Activated CD4-positive, alpha-beta T cell treated with anti-CD3 and anti-CD28 coated beads, Interleukin-2, amount 10 ng/mL, durations not matched to agents 7 days and 5 days (primary cell): ENCODE measurements at regions of chr20 and their contacts with region 1.

Region 1: DNA sequence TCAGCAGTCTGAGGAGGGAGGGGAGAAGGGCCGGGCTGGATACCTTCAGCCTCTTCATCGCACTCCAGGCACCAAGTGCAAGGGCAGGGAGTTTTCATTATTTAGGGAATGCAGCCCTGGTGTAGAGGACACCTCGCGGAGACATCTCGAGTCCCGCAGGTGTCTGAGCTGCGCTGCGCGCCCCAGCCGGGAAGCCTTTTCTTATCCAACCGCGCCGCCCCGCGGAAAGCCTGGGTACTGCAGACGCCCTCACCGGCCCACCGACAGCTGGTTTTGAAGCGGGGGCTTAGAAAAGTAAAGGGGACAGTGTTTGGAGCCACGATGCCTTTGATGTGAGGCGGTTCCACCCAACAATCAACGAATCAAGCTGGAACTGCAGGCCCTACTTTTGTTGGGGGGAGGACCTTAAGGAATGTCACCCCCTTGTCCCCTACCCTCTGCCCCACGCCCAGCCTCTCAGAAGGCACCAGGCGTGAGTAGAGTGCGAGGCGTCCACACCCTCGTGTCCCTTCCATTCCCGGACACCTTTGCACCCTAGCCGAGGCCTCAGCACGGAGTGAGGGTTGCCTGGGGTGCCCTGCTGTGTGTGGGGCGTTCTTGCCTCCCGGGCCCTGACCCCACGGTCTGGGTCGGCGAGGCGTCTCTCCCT is 8.6 kb downstream of the NKX2-2 start:
- DNase-seq: peak; percentile 74
- H3K4me3 Mint-ChIP-seq: no peak overlapping the region
- H3K27ac Mint-ChIP-seq: no peak overlapping the region
- H3K4me1 Mint-ChIP-seq: peaks cover 26% of the 10 kb centered on the region
- H3K27me3 Mint-ChIP-seq: peaks cover 50% of the 10 kb centered on the region

Region 2: GRCh38 chr20:20860078-20860806 is 645.0 kb before region 1 on chr20:
- CTCF ChIA-PET with region 1: interaction called, 10 read pairs
- POLR2A ChIA-PET with region 1: no interaction called
- DNase-seq: peak; percentile 89
- H3K4me3 Mint-ChIP-seq: no peak overlapping the region
- H3K27ac Mint-ChIP-seq: no peak overlapping the region
- H3K4me1 Mint-ChIP-seq: no peaks in the 10 kb centered on the region
- H3K27me3 Mint-ChIP-seq: peaks cover 16% of the 10 kb centered on the region

Region 3: GRCh38 chr20:21102603-21103311 is 402.5 kb before region 1 on chr20:
- CTCF ChIA-PET with region 1: interaction called, 12 read pairs
- POLR2A ChIA-PET with region 1: no interaction called
- DNase-seq: peak; percentile 48
- H3K4me3 Mint-ChIP-seq: peak overlapping the region; percentile 79
- H3K27ac Mint-ChIP-seq: peak overlapping the region; percentile 66
- H3K4me1 Mint-ChIP-seq: peaks cover 53% of the 10 kb centered on the region
- H3K27me3 Mint-ChIP-seq: peaks cover 86% of the 10 kb centered on the region

Region 4: GRCh38 chr20:21219686-21220085 is 285.6 kb before region 1 on chr20:
- CTCF ChIA-PET with region 1: no interaction called
- POLR2A ChIA-PET with region 1: no interaction called
- DNase-seq: no peak
- H3K4me3 Mint-ChIP-seq: no peak overlapping the region
- H3K27ac Mint-ChIP-seq: no peak overlapping the region
- H3K4me1 Mint-ChIP-seq: no peaks in the 10 kb centered on the region
- H3K27me3 Mint-ChIP-seq: no peaks in the 10 kb centered on the region

Region 5: DNA sequence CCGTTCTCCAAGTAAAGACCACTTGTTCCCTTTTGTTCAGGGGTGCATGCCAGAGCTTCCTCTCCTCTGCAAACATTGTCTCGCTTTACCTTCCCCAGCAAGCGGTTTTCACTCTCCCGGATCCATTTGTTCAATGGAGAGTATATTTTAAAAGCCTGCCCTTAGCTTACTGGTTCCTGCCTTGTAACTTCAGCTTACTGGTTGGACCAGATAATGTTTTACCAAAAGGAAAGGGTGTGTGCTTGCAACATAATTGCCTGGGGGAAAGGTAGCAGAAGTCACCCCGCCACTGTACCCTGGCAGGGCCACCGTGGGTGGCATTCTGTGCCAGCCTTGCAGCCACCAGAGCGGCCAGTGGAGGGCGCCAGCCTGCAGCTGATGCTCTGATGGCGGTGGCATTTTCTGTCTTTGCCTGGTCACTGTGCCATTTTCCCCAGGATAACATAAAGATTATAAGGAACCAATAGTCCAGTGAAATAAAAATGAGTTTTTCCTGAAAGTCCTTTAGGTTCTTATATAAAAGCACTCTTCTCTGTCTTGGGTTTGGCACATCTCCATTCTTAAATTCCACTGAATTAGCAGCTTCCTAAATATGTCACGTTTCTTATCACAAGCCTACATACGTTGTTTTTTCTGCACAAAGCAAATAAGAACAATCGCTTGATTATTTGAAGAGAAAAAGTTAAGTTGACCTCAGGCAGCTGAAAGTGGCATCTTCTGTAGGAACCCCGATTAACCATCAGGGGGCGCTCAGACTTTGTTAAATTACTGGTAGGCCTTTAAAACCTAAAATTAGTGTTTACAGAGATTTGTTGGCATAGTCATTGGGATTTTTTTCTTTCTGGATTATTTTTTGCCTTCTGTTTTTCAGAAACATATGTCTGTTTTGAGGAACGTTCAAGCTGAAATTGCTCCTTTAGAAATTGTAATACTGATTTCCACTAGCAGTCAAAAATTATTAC is 269.5 kb before region 1 on chr20:
- CTCF ChIA-PET with region 1: interaction called, 65 read pairs
- POLR2A ChIA-PET with region 1: no interaction called
- DNase-seq: peak; percentile 77
- H3K4me3 Mint-ChIP-seq: no peak overlapping the region
- H3K27ac Mint-ChIP-seq: no peak overlapping the region
- H3K4me1 Mint-ChIP-seq: peaks cover 2% of the 10 kb centered on the region
- H3K27me3 Mint-ChIP-seq: no peaks in the 10 kb centered on the region

Region 6: GRCh38 chr20:21352703-21353102 is 152.6 kb before region 1 on chr20:
- CTCF ChIA-PET with region 1: no interaction called
- POLR2A ChIA-PET with region 1: no interaction called
- DNase-seq: no peak
- H3K4me3 Mint-ChIP-seq: no peak overlapping the region
- H3K27ac Mint-ChIP-seq: no peak overlapping the region
- H3K4me1 Mint-ChIP-seq: no peaks in the 10 kb centered on the region
- H3K27me3 Mint-ChIP-seq: no peaks in the 10 kb centered on the region

Region 7: GRCh38 chr20:21395666-21396598 is 109.4 kb before region 1 on chr20:
- CTCF ChIA-PET with region 1: interaction called, 10 read pairs
- POLR2A ChIA-PET with region 1: no interaction called
- DNase-seq: peak; percentile 64
- H3K4me3 Mint-ChIP-seq: peak overlapping the region; percentile 62
- H3K27ac Mint-ChIP-seq: peak overlapping the region; percentile 63
- H3K4me1 Mint-ChIP-seq: peaks cover 35% of the 10 kb centered on the region
- H3K27me3 Mint-ChIP-seq: peaks cover 78% of the 10 kb centered on the region

Region 8: DNA sequence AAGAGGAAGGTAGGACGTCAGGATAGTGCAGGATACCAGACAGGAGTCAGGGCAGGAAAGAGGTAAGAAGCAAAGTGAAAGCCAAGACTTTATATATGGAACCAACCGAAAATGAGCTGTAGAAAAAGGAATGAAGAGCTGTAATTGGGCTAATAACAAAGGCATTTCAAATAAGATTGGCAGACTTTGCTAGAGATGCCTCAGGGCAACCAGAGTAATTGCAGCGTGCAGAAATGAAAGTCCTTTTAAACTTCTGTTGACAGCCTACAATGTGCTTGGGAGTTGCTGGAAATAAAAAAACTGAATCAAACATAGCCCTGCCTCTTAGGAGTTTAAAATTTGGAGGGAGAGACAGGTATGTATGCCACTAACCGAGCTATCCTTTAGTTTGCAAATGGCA is 51.6 kb before region 1 on chr20:
- CTCF ChIA-PET with region 1: no interaction called
- POLR2A ChIA-PET with region 1: no interaction called
- DNase-seq: no peak
- H3K4me3 Mint-ChIP-seq: no peak overlapping the region
- H3K27ac Mint-ChIP-seq: no peak overlapping the region
- H3K4me1 Mint-ChIP-seq: no peaks in the 10 kb centered on the region
- H3K27me3 Mint-ChIP-seq: peaks cover 32% of the 10 kb centered on the region

Region 9: DNA sequence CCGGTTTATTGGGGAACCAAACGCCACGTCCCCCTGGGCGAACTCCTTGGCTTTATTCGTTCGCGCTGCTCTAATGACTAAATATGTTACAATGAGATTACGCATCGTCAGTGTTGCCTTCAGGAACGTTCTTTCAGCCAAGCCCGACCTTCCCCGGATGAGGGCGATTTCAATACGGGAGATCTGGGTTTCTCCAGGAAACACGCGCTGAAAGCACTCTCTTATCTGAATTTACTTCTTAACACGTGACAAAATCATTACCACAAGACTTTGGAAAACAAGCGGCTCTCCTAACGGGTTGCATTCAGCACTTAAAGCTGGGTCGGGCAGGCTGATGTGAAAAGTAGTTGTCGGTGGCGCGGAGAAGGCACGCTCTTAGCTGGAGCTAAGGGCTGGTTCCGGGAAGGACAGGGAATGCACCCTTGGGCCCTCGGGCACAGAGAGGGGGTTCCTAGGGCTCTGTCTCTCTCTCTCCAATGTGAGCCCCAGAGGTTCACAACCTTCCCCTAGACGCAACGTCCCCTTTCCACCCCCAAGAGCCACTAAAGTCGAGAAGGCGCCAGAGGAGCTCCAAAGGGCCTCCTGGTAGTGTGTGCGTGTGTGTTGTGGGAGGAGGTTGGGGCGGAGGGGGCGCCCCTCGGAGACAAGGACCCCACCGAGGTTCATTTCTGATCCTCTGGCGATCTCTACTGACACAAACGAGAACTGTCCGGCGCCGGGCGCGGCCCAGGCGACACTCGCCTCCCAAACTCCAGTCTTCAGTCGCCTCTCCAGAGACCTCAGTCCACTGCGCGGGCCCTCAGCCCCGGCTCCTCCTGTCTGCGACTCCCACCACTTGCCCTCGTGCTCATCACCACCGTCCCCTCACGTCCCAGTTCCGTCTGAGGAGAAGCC is 15.7 kb after region 1 on chr20:
- CTCF ChIA-PET with region 1: interaction called, 10 read pairs
- POLR2A ChIA-PET with region 1: no interaction called
- DNase-seq: no peak
- H3K4me3 Mint-ChIP-seq: peak overlapping the region; percentile 45
- H3K27ac Mint-ChIP-seq: peak overlapping the region; percentile 72
- H3K4me1 Mint-ChIP-seq: peaks cover 4% of the 10 kb centered on the region
- H3K27me3 Mint-ChIP-seq: peaks cover 89% of the 10 kb centered on the region

Region 10: DNA sequence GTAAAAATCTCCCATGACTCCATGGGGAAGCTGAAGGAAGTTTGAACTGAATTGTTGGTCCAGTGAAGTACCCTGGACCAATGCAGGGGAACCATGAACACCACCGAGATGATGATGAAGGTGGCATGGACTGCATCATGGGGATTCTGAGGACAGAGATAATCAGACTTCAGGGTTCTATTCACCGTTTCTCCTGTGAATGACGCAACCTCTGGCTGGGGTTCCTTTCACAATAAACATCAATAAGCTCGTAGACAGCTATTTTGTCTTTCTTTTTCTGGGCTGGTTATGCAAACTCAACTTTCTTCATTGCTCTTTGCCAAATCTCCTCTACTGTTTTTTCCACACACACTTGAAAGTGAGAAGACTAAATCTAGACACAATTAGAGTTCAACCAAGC is 96.5 kb after region 1 on chr20:
- CTCF ChIA-PET with region 1: no interaction called
- POLR2A ChIA-PET with region 1: no interaction called
- DNase-seq: no peak
- H3K4me3 Mint-ChIP-seq: no peak overlapping the region
- H3K27ac Mint-ChIP-seq: no peak overlapping the region
- H3K4me1 Mint-ChIP-seq: no peaks in the 10 kb centered on the region
- H3K27me3 Mint-ChIP-seq: peaks cover 6% of the 10 kb centered on the region